H1 (cell line): ENCODE measurements at regions of chr2 and their contacts with region 1.

Region 1: GRCh38 chr2:127695491-127696472 is 5.5 kb upstream of the SFT2D3 start:
- DNase-seq: peak in 1 of 2 experiments; percentile 82
- H3K4me3 ChIP-seq: peak overlapping the region in 2 of 4 experiments; percentile 15 to 58; a peak in 4 of 8 replicates
- H3K27ac ChIP-seq: no peak overlapping the region
- H3K4me1 ChIP-seq: peaks cover 0 to 4% (median 2%) of the 10 kb centered on the region in 4 experiments; a peak in 5 of 7 replicates
- H3K27me3 ChIP-seq: peaks cover 0 to 8% (median 5%) of the 10 kb centered on the region in 4 experiments; a peak in 3 of 7 replicates
- CTCF ChIP-seq: peak; percentile 65 to 87 (median 86)
- EP300 ChIP-seq: no peak
- POLR2A ChIP-seq: no peak
- RAD21 ChIP-seq: peak; percentile 72 to 80

Region 2: DNA sequence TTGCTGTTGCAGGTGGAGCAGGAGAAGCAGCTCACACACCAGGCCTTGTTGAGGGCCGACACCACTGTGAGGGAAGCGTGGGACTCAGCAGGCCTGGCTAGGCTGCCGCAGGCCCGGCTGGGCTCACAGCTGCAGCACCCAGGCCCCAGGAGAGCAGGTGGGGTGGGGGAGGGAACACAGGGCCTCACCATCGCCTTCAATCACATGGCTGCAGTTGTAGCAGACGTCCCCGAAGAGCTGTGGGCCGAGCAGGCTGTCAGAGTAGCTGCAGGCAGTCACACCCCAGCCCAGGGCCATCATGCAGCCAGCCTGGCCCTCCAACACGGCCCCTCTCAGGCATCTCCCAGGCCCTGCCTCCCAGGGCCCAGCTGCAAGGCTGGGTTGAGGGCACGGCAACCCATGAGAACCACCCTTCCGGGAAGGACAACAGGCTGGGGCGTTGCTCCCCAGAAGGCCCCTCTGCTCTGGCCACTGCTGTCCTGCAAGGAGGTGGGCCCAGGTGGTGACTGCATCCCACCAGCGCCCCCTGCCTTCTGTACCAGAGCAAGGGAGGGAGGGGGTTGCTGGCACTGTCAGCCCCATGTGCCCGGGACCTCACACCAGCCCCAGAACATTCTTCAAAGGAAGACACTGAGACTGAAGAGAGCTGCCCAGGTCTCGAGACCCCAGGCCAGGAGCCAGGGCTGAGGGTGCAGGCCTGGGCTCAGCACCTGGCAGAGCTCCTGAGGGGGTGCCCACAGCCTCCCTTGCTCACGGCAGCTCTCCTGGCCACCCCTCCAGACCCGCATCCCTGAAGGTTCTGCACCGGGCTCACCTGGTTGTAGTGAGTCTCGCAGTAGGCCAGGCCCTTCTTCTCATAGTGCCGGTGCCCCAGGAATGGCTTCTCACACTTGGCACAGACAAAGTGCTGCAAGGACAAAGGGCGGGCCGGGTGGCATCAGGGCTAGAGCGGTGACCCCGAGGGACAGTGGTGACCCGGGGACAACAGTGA is 55.4 kb before region 1 on chr2:
- CTCF ChIA-PET with region 1: interaction called, 15 read pairs
- POLR2A ChIA-PET with region 1: interaction called, 4 read pairs
- DNase-seq: peak in 1 of 2 experiments; percentile 75
- H3K4me3 ChIP-seq: no peak overlapping the region
- H3K27ac ChIP-seq: no peak overlapping the region
- H3K4me1 ChIP-seq: peaks cover 0 to 19% (median 7%) of the 10 kb centered on the region in 4 experiments; a peak in 6 of 7 replicates
- H3K27me3 ChIP-seq: no peaks in the 10 kb centered on the region
- CTCF ChIP-seq: peak in 2 of 3 experiments; percentile 61 to 79; a peak in 3 of 4 replicates
- EP300 ChIP-seq: no peak
- POLR2A ChIP-seq: no peak
- RAD21 ChIP-seq: peak; percentile 66 to 73

Region 3: GRCh38 chr2:127655209-127656073 is 40.3 kb before region 1 on chr2:
- CTCF ChIA-PET with region 1: interaction called, 15 read pairs
- POLR2A ChIA-PET with region 1: interaction called, 3 read pairs
- DNase-seq: no peak
- H3K4me3 ChIP-seq: no peak overlapping the region
- H3K27ac ChIP-seq: no peak overlapping the region
- H3K4me1 ChIP-seq: no peaks in the 10 kb centered on the region; a peak in 3 of 7 replicates
- H3K27me3 ChIP-seq: peaks cover 0 to 2% (median 0%) of the 10 kb centered on the region in 4 experiments; a peak in 1 of 7 replicates
- CTCF ChIP-seq: no peak
- EP300 ChIP-seq: no peak
- POLR2A ChIP-seq: no peak
- RAD21 ChIP-seq: no peak

Region 4: DNA sequence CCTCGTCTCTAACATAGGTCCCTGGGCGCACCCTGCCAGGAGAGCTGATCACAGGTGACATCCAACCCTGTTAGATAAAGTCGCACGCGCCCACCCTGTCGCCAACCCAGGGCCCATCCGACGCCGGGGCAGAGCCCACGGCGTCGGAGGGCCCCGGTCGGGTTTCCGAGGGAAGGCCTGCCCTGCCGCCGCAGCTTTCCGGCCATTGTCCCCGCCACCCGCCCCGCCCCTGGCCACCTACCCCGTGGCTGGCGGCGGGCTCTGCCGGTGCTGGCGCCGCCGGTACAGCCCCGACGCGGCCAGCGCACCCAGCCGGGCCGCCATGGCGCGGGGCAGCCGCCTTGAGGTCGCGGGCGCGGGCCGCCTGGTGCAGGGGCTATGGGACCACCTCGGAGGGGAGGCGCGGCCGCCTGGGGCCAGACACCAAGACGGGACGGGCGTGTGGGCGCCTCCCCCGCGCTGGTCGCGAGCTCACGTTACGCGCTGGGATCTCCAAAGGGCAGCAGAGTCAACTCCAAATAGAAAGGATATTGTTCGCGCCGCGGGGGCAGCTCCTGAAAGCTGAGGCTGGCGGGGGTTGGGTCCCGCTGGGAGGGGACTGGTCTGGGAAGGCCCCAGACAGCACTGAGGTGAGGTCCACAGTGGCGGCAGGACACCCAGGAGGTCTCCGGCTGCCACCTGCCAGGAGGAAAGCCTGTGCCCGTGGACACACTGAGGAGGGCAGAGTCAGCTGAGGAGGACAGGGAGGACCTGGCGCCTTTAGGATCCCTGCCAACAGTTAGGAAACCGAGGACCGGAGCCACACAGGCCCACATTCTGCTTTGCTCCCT is 31.5 kb before region 1 on chr2:
- CTCF ChIA-PET with region 1: interaction called, 15 read pairs
- POLR2A ChIA-PET with region 1: no interaction called
- DNase-seq: no peak
- H3K4me3 ChIP-seq: peak overlapping the region; percentile 25 to 63 (median 45)
- H3K27ac ChIP-seq: no peak overlapping the region
- H3K4me1 ChIP-seq: peaks cover 0 to 3% (median 0%) of the 10 kb centered on the region in 4 experiments; a peak in 3 of 7 replicates
- H3K27me3 ChIP-seq: peaks cover 9 to 33% (median 25%) of the 10 kb centered on the region in 4 experiments
- CTCF ChIP-seq: no peak
- EP300 ChIP-seq: no peak
- POLR2A ChIP-seq: no peak
- RAD21 ChIP-seq: no peak

Region 5: GRCh38 chr2:127675331-127676261 is 20.2 kb before region 1 on chr2 and contains the start of gene LIMS2:
- CTCF ChIA-PET with region 1: interaction called, 40 read pairs
- POLR2A ChIA-PET with region 1: interaction called, 4 read pairs
- DNase-seq: peak in 1 of 2 experiments; percentile 66
- H3K4me3 ChIP-seq: peak within 1 kb of the TSS; percentile 46 to 70 (median 66)
- H3K27ac ChIP-seq: no peak within 1 kb of the TSS
- H3K4me1 ChIP-seq: peaks cover 0 to 4% (median 0%) of the 10 kb centered on the region in 4 experiments; a peak in 3 of 7 replicates
- H3K27me3 ChIP-seq: peaks cover 10 to 57% (median 33%) of the 10 kb centered on the region in 4 experiments
- CTCF ChIP-seq: no peak
- EP300 ChIP-seq: no peak
- POLR2A ChIP-seq: no peak
- RAD21 ChIP-seq: peak; percentile 25 to 48; a peak in 3 of 4 replicates
- total RNA-seq, gene LIMS2: 4.8 and 4.9 TPM in 2 replicates

Region 6: DNA sequence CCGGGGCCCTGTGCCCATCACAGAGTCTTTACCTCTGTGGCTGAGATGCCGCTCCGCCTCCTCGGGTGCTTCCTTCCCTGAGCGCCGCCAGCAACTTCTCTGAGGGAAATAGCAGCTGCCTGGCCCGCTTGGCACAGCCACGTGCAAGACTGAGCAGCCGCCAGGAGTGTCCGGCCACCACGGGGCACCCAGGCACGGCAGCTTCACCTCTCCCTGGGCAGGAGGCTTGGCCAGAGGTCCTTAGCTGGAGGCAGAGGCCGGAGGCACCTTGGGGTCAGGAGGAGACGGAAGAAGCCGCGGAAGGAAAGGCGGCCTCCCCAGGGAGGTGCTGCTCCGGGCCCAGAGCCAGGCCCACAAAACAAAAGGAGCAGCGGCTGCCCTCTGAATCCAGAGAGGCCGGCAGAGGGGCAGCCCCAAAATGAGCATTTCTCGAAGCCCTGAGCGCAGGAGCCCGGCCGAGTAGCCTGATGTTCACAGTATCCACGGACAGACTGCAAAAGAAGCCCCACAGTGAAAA is 14.4 kb before region 1 on chr2:
- CTCF ChIA-PET with region 1: interaction called, 40 read pairs
- POLR2A ChIA-PET with region 1: interaction called, 3 read pairs
- DNase-seq: peak in 1 of 2 experiments; percentile 60
- H3K4me3 ChIP-seq: no peak overlapping the region
- H3K27ac ChIP-seq: no peak overlapping the region
- H3K4me1 ChIP-seq: peaks cover 0 to 8% (median 0%) of the 10 kb centered on the region in 4 experiments; a peak in 2 of 7 replicates
- H3K27me3 ChIP-seq: peaks cover 2 to 16% (median 9%) of the 10 kb centered on the region in 4 experiments
- CTCF ChIP-seq: no peak
- EP300 ChIP-seq: no peak
- POLR2A ChIP-seq: no peak
- RAD21 ChIP-seq: no peak

Region 7: GRCh38 chr2:127735537-127736399 is 40.0 kb after region 1 on chr2:
- CTCF ChIA-PET with region 1: no interaction called
- POLR2A ChIA-PET with region 1: no interaction called
- DNase-seq: no peak
- H3K4me3 ChIP-seq: no peak overlapping the region
- H3K27ac ChIP-seq: no peak overlapping the region
- H3K4me1 ChIP-seq: no peaks in the 10 kb centered on the region
- H3K27me3 ChIP-seq: no peaks in the 10 kb centered on the region
- CTCF ChIP-seq: no peak
- EP300 ChIP-seq: no peak
- POLR2A ChIP-seq: no peak
- RAD21 ChIP-seq: no peak